CD4-positive, alpha-beta T cell (primary cell): ENCODE measurements at regions of chr17 and their contacts with region 1.

Region 1: GRCh38 chr17:80101011-80101945 is at the start of gene GAA:
- DNase-seq: peak; percentile 71 to 95 (median 86)
- ATAC-seq: peak; percentile 83
- H3K4me3 ChIP-seq: peak within 1 kb of the TSS; percentile 99
- H3K4me3 Mint-ChIP-seq: peak within 1 kb of the TSS; percentile 93
- H3K27ac ChIP-seq: peak within 1 kb of the TSS in 1 of 2 donors; percentile 46
- H3K27ac Mint-ChIP-seq: peak within 1 kb of the TSS; percentile 84
- H3K4me1 ChIP-seq: peaks cover 29% of the 10 kb centered on the region
- H3K4me1 Mint-ChIP-seq: peaks cover 35% of the 10 kb centered on the region
- H3K27me3 ChIP-seq: no peaks in the 10 kb centered on the region
- H3K27me3 Mint-ChIP-seq: no peaks in the 10 kb centered on the region
- CTCF ChIP-seq: peak; percentile 64
- total RNA-seq, gene GAA: 22.2 to 22.4 TPM

Region 2: GRCh38 chr17:80047192-80047591 is 54.1 kb before region 1 on chr17:
- CTCF ChIA-PET with region 1: no interaction called
- POLR2A ChIA-PET with region 1: no interaction called
- intact Hi-C with region 1: no loop called
- DNase-seq: no peak
- ATAC-seq: no peak
- H3K4me3 ChIP-seq: no peak overlapping the region
- H3K4me3 Mint-ChIP-seq: no peak overlapping the region
- H3K27ac ChIP-seq: no peak overlapping the region
- H3K27ac Mint-ChIP-seq: no peak overlapping the region
- H3K4me1 ChIP-seq: no peaks in the 10 kb centered on the region
- H3K4me1 Mint-ChIP-seq: no peaks in the 10 kb centered on the region
- H3K27me3 ChIP-seq: no peaks in the 10 kb centered on the region
- H3K27me3 Mint-ChIP-seq: no peaks in the 10 kb centered on the region
- CTCF ChIP-seq: no peak

Region 3: GRCh38 chr17:80147035-80147836 is 46.0 kb after region 1 on chr17 and contains the start of gene EIF4A3:
- CTCF ChIA-PET with region 1: interaction called, 23 read pairs
- POLR2A ChIA-PET with region 1: interaction called, 13 read pairs
- intact Hi-C with region 1: loop called (anchors 1 to 5 kb)
- DNase-seq: peak; percentile 91 to 100 (median 95)
- ATAC-seq: peak; percentile 90
- H3K4me3 ChIP-seq: peak within 1 kb of the TSS; percentile 95
- H3K4me3 Mint-ChIP-seq: peak within 1 kb of the TSS; percentile 99
- H3K27ac ChIP-seq: peak within 1 kb of the TSS; percentile 84 to 93
- H3K27ac Mint-ChIP-seq: peak within 1 kb of the TSS; percentile 95
- H3K4me1 ChIP-seq: peaks cover 45% of the 10 kb centered on the region
- H3K4me1 Mint-ChIP-seq: peaks cover 49% of the 10 kb centered on the region
- H3K27me3 ChIP-seq: no peaks in the 10 kb centered on the region
- H3K27me3 Mint-ChIP-seq: no peaks in the 10 kb centered on the region
- CTCF ChIP-seq: no peak
- total RNA-seq, gene EIF4A3: 79.6 to 79.7 TPM

Region 4: DNA sequence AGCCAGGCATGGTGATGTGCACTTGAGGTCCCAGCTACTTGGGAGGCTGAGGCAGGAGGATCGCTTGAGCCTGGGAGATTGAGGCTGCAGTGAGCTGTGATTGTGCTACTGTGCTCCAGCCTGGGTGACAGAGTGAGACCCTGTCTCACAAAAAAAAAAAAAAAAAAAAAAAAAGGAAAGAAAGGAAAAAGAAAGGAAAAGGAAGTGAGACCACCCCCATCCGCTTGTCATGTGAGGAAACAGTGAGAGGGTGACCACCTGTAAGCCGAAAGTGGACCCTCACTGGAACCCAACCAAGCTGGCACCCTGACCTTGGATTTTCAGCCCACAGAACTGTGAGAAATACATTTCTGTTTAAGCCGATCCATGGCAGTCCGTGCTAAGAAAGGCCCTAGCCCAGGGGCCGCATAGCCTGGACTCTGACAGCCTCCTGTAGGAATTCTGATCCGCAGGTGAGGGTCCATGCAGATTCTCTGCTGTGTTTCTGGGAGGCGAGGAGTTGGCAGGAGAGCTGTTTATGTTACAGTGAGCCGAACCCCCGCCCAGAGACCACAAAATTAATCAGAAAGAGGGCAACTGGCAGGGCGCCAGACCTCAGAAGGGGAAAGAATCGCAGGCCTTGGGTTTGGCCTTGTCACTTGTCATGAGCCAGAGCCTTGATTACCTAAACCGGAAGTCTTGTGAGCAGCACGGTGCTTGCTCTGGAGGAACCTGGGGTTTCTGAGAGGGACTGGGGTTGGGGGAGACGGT is 117.9 kb after region 1 on chr17:
- CTCF ChIA-PET with region 1: no interaction called
- POLR2A ChIA-PET with region 1: interaction called, 3 read pairs
- intact Hi-C with region 1: loop called in 1 of 2 experiments (anchors 5 kb)
- DNase-seq: peak; percentile 86 to 97 (median 93)
- ATAC-seq: peak; percentile 90
- H3K4me3 ChIP-seq: peak overlapping the region; percentile 99
- H3K4me3 Mint-ChIP-seq: peak overlapping the region; percentile 95
- H3K27ac ChIP-seq: peak overlapping the region; percentile 89 to 93
- H3K27ac Mint-ChIP-seq: peak overlapping the region; percentile 93
- H3K4me1 ChIP-seq: peaks cover 45% of the 10 kb centered on the region
- H3K4me1 Mint-ChIP-seq: peaks cover 43% of the 10 kb centered on the region
- H3K27me3 ChIP-seq: no peaks in the 10 kb centered on the region
- H3K27me3 Mint-ChIP-seq: no peaks in the 10 kb centered on the region
- CTCF ChIP-seq: no peak

Region 5: GRCh38 chr17:80544655-80545498 is 443.6 kb after region 1 on chr17 and contains the start of gene RPTOR:
- CTCF ChIA-PET with region 1: no interaction called
- POLR2A ChIA-PET with region 1: no interaction called
- intact Hi-C with region 1: loop called in 1 of 2 experiments (anchors 10 kb)
- DNase-seq: peak; percentile 80 to 92 (median 84)
- ATAC-seq: peak; percentile 99
- H3K4me3 ChIP-seq: peak within 1 kb of the TSS; percentile 98
- H3K4me3 Mint-ChIP-seq: peak within 1 kb of the TSS; percentile 92
- H3K27ac ChIP-seq: peak within 1 kb of the TSS; percentile 28 to 56
- H3K27ac Mint-ChIP-seq: peak within 1 kb of the TSS; percentile 83
- H3K4me1 ChIP-seq: peaks cover 20% of the 10 kb centered on the region
- H3K4me1 Mint-ChIP-seq: peaks cover 36% of the 10 kb centered on the region
- H3K27me3 ChIP-seq: peaks cover 0 to 2% of the 10 kb centered on the region in 2 experiments
- H3K27me3 Mint-ChIP-seq: peaks cover 8% of the 10 kb centered on the region
- CTCF ChIP-seq: no peak
- total RNA-seq, gene RPTOR: 45.0 to 47.1 TPM